HEK293 (cell line): ENCODE measurements at regions of chr1 and their contacts with region 1.

Region 1: DNA sequence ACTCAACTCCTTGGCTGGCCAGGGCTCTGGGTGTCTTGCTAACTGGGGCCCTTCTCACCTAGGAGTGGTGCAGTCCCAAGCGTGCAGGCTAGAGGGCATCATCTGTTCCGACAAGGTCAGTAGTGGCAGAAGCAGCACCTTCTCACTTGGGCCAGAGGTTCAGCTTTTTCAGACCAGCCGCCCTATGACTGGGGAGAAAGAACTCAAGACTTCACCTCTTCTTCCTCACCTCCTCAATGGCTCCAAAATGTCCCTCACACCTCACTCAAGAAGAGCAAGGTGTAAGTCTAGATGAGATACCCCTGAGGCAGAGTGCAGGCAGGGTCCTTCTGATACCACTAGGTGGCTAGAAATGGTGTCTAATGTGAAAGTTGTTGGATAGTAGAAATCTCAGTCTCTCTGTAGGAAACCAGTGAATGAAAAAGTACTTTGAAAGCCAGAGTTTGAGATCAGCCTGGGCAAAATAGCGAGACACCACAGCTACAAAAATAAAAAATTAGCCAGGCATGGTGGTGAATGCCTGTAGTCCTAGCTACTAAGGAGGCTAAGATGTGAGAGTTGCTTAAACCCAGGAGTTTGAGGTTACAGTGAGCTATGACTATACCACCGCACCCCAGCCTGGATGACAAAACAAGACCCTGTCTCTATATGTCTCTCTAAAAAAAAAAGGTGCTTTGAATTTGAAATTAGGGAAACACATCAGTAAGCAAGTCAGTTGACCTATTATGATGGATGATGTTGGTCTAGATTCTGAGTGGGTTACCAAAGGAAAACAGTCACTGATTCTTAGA is 8.6 kb upstream of the IL20 start:
- H3K4me3 ChIP-seq: no peak overlapping the region
- H3K27ac ChIP-seq: no peak overlapping the region
- H3K4me1 ChIP-seq: peaks cover 4% of the 10 kb centered on the region; the same call in 1 of the 2 replicates
- CTCF ChIP-seq: no peak

Region 2: DNA sequence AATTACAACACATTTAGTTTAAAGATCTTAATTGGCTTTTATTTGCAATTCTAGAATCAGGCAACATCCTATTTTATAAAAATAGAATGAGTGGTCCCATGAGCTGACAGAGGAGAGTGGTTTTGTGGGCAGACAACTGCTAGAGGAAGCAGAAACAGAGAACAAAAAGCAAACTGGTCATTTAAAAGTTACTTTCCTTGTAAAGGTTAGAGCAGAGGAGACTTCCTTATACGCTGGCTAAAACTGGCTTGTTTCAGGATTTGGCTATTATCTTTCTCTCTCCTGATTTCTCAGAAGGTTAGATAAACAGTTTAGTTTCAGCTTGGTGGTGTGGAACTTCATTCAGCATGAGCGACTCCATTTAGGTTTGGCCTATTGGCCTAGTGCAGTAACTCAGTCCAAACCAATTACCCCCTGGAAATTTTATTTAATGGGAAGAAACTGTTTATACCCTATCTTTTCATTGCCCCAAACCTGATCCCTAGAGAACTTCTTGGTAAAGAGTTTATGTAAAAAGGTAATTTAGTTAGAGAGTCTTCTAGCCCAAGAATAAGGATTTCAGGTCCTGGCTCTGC is 23.7 kb before region 1 on chr1:
- CTCF ChIA-PET with region 1: interaction called, 10 read pairs
- POLR2A ChIA-PET with region 1: no interaction called
- H3K4me3 ChIP-seq: no peak overlapping the region
- H3K27ac ChIP-seq: no peak overlapping the region
- H3K4me1 ChIP-seq: peaks cover 3% of the 10 kb centered on the region; the same call in 1 of the 2 replicates
- CTCF ChIP-seq: no peak

Region 3: GRCh38 chr1:206846487-206846886 is 10.4 kb before region 1 on chr1:
- CTCF ChIA-PET with region 1: interaction called, 11 read pairs
- POLR2A ChIA-PET with region 1: no interaction called
- H3K4me3 ChIP-seq: no peak overlapping the region
- H3K27ac ChIP-seq: no peak overlapping the region
- H3K4me1 ChIP-seq: no peaks in the 10 kb centered on the region
- CTCF ChIP-seq: no peak